ENCODE measurements at regions of chr7 and their contacts with region 1.

Region 1: GRCh38 chr7:120792091-120792860 is 65.7 kb downstream of the TSPAN12 start:
- DNase-seq: peak; percentile 44
- ATAC-seq: peak; percentile 99
- H3K4me3 ChIP-seq: no peak overlapping the region
- H3K27ac ChIP-seq: no peak overlapping the region
- H3K4me1 ChIP-seq: no peaks in the 10 kb centered on the region
- H3K27me3 ChIP-seq: no peaks in the 10 kb centered on the region
- CTCF ChIP-seq: peak; percentile 88
- EP300 ChIP-seq: no peak
- POLR2A ChIP-seq: no peak
- RAD21 ChIP-seq: no peak

Region 2: DNA sequence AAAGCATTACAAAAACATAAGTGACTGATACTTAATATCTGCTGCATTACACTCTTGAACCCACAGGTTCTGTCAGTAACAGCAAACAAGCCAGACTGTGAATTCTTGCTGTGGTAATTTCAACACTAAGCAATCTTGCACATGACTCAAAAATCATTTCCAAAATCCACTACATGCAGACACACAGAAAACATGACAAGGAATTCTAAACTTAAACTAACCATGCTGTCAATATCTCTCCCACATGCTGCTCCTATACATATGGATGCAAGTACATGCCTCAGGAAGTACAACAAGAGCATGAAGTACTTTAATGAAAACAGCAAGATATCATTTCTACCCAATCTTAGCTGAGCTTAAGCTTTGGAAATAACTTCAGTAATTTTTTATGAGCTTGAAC is 1409.5 kb before region 1 on chr7:
- CTCF ChIA-PET with region 1: no interaction called
- POLR2A ChIA-PET with region 1: no interaction called
- in situ Hi-C with region 1: no loop called
- intact Hi-C with region 1: no loop called
- DNase-seq: no peak
- ATAC-seq: no peak
- H3K4me3 ChIP-seq: no peak overlapping the region
- H3K27ac ChIP-seq: no peak overlapping the region
- H3K4me1 ChIP-seq: no peaks in the 10 kb centered on the region
- H3K27me3 ChIP-seq: no peaks in the 10 kb centered on the region
- CTCF ChIP-seq: no peak
- EP300 ChIP-seq: no peak
- POLR2A ChIP-seq: no peak
- RAD21 ChIP-seq: no peak

Region 3: GRCh38 chr7:120857588-120858573 is 65.6 kb after region 1 on chr7 and contains the start of gene TSPAN12:
- CTCF ChIA-PET with region 1: no interaction called
- POLR2A ChIA-PET with region 1: no interaction called
- in situ Hi-C with region 1: no loop called
- intact Hi-C with region 1: loop called (anchors 5 kb)
- DNase-seq: peak; percentile 39
- ATAC-seq: peak; percentile 98
- H3K4me3 ChIP-seq: peak within 1 kb of the TSS; percentile 61 to 75 (median 70)
- H3K27ac ChIP-seq: no peak within 1 kb of the TSS
- H3K4me1 ChIP-seq: peaks cover 6% of the 10 kb centered on the region
- H3K27me3 ChIP-seq: no peaks in the 10 kb centered on the region; a peak in 1 of 5 replicates
- CTCF ChIP-seq: peak; percentile 62
- EP300 ChIP-seq: no peak
- POLR2A ChIP-seq: no peak
- RAD21 ChIP-seq: peak; percentile 55
- total RNA-seq, gene TSPAN12: 0.70 and 0.95 TPM in 2 replicates

Region 4: DNA sequence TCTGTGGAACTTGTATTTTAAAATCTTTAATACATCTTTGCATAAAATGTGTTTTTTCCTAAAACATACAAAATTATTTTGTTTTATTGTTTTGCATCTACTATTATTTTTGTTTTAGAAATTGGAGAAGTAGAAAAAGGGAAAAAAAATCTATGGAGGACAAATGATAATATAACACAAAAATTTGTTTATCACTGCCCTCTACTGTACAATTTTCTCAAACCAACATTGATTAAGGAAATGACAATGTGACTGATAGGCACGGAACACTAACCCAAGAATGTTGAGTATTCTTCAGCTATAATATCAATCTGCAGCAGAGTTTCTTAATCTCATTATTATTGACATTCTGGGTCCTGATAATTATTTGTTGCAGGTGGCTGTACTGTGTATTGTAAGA is 148.8 kb after region 1 on chr7:
- CTCF ChIA-PET with region 1: interaction called, 6 read pairs
- POLR2A ChIA-PET with region 1: no interaction called
- in situ Hi-C with region 1: no loop called
- intact Hi-C with region 1: loop called (anchors 1 kb)
- DNase-seq: no peak
- ATAC-seq: 0 out of 3 replicates have a peak, but pooled peaks have one; percentile 43
- H3K4me3 ChIP-seq: no peak overlapping the region
- H3K27ac ChIP-seq: no peak overlapping the region
- H3K4me1 ChIP-seq: no peaks in the 10 kb centered on the region
- H3K27me3 ChIP-seq: no peaks in the 10 kb centered on the region
- CTCF ChIP-seq: peak; percentile 27; the same call in 1 of the 2 replicates
- EP300 ChIP-seq: no peak
- POLR2A ChIP-seq: no peak
- RAD21 ChIP-seq: no peak

Region 5: GRCh38 chr7:121081327-121081936 is 289.2 kb after region 1 on chr7:
- CTCF ChIA-PET with region 1: no interaction called
- POLR2A ChIA-PET with region 1: no interaction called
- in situ Hi-C with region 1: no loop called
- intact Hi-C with region 1: loop called (anchors 1 kb)
- DNase-seq: peak; percentile 36
- ATAC-seq: peak; percentile 52
- H3K4me3 ChIP-seq: no peak overlapping the region
- H3K27ac ChIP-seq: no peak overlapping the region
- H3K4me1 ChIP-seq: peaks cover 11% of the 10 kb centered on the region
- H3K27me3 ChIP-seq: no peaks in the 10 kb centered on the region
- CTCF ChIP-seq: peak; percentile 68
- EP300 ChIP-seq: no peak
- POLR2A ChIP-seq: no peak
- RAD21 ChIP-seq: 0 out of 2 replicates have a peak, but pooled peaks have one; percentile 19

Region 6: GRCh38 chr7:121107923-121108498 is 315.7 kb after region 1 on chr7:
- CTCF ChIA-PET with region 1: interaction called, 4 read pairs
- POLR2A ChIA-PET with region 1: no interaction called
- in situ Hi-C with region 1: no loop called
- intact Hi-C with region 1: loop called (anchors 1 kb)
- DNase-seq: peak; percentile 53
- ATAC-seq: peak; percentile 94
- H3K4me3 ChIP-seq: no peak overlapping the region
- H3K27ac ChIP-seq: no peak overlapping the region
- H3K4me1 ChIP-seq: no peaks in the 10 kb centered on the region
- H3K27me3 ChIP-seq: no peaks in the 10 kb centered on the region
- CTCF ChIP-seq: peak; percentile 68
- EP300 ChIP-seq: no peak
- POLR2A ChIP-seq: no peak
- RAD21 ChIP-seq: no peak

Measured in HepG2 (cell line).